ENCODE measurements at regions of chr4 and their contacts with region 1.

Region 1: GRCh38 chr4:183118585-183118984 is 19.5 kb downstream of the WWC2 start:
- DNase-seq: no peak
- ATAC-seq: peak; percentile 31

Region 2: GRCh38 chr4:183200453-183200852 is 81.9 kb after region 1 on chr4:
- intact Hi-C with region 1: loop called (anchors 5 kb)
- DNase-seq: peak; percentile 70
- ATAC-seq: peak; percentile 46

Region 3: DNA sequence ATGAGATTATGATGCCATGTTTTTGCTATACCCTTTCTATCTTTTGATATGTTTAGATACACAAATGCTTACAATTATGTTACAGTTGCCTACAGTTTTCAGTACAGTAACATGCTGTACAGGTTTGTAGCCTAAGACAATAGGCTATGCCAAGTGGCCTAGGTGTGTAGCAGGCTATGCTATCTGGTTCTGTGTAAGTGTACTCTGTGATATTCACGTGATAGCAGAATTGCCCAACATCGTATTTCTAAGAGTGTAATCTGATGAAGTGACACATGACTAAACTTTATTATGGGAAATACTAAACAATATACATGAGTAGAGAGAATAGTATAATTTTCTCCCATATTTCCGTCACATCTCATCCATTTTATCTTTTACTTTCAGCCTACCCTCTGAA is 104.5 kb after region 1 on chr4:
- intact Hi-C with region 1: no loop called
- DNase-seq: no peak
- ATAC-seq: no peak

Measured in Right ventricle myocardium inferior (tissue), 1 donor.